GM10248 (cell line): ENCODE measurements at regions of chr6 and their contacts with region 1.

Region 1: GRCh38 chr6:39102071-39102820 is 12.7 kb downstream of the SAYSD1 start:
- DNase-seq: peak; percentile 50
- CTCF ChIP-seq: peak; percentile 27

Region 2: GRCh38 chr6:37971711-37972390 is 1130.4 kb before region 1 on chr6:
- CTCF ChIA-PET with region 1: no interaction called
- POLR2A ChIA-PET with region 1: no interaction called
- DNase-seq: no peak
- CTCF ChIP-seq: no peak

Region 3: GRCh38 chr6:39003072-39003471 is 99.2 kb before region 1 on chr6:
- CTCF ChIA-PET with region 1: interaction called, 12 read pairs
- POLR2A ChIA-PET with region 1: no interaction called
- DNase-seq: no peak
- CTCF ChIP-seq: peak; percentile 13

Region 4: DNA sequence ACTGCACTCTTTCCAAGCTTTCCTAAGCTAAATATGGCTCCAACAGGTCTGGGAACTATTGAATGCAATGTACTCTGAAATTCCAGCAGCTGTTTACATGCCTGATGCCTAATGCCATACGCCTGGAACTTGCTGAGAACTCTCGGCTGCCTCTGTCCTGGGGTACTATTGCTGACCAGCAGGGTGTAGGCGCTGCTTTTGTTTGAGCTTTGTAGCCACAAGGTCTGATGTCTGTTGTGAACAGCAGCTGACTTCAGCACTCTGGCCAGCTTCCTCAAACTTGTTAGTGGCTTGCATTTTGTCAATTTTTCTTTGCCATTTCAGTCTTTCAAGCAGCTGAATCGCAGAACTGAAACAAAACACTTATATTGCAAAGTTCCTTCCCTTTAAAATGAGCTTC is 13.9 kb before region 1 on chr6:
- CTCF ChIA-PET with region 1: interaction called, 15 read pairs
- POLR2A ChIA-PET with region 1: no interaction called
- DNase-seq: no peak
- CTCF ChIP-seq: no peak

Region 5: GRCh38 chr6:39114704-39115599 is 12.7 kb after region 1 on chr6 and contains the start of gene SAYSD1:
- CTCF ChIA-PET with region 1: interaction called, 10 read pairs
- POLR2A ChIA-PET with region 1: no interaction called
- DNase-seq: peak; percentile 93
- CTCF ChIP-seq: no peak

Region 6: DNA sequence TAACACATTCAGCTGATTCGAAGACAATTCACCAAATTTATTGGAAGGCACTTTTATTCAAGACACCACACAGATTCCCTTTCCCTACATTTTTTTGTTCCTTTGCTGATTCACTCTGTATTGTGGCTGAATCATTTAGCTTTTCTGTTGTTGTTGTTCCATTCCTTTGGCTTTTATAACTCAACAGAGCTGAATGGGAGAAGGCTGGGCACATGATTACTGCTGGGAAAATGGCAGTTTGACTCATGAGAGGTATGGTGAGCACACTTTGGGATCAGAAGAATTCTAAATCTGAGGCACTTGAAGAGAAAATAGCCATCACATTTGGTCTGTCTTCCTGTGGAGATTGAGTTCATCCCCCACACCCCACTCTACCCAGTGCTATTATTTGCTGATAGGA is 28.4 kb after region 1 on chr6:
- CTCF ChIA-PET with region 1: no interaction called
- POLR2A ChIA-PET with region 1: no interaction called
- DNase-seq: no peak
- CTCF ChIP-seq: no peak

Region 7: GRCh38 chr6:39143233-39143930 is 41.1 kb after region 1 on chr6:
- CTCF ChIA-PET with region 1: no interaction called
- POLR2A ChIA-PET with region 1: no interaction called
- DNase-seq: no peak
- CTCF ChIP-seq: no peak

Region 8: GRCh38 chr6:39855356-39855995 is 753.2 kb after region 1 on chr6:
- CTCF ChIA-PET with region 1: no interaction called
- POLR2A ChIA-PET with region 1: no interaction called
- DNase-seq: no peak
- CTCF ChIP-seq: no peak